ENCODE measurements at regions of chr3 and their contacts with region 1.

Region 1: DNA sequence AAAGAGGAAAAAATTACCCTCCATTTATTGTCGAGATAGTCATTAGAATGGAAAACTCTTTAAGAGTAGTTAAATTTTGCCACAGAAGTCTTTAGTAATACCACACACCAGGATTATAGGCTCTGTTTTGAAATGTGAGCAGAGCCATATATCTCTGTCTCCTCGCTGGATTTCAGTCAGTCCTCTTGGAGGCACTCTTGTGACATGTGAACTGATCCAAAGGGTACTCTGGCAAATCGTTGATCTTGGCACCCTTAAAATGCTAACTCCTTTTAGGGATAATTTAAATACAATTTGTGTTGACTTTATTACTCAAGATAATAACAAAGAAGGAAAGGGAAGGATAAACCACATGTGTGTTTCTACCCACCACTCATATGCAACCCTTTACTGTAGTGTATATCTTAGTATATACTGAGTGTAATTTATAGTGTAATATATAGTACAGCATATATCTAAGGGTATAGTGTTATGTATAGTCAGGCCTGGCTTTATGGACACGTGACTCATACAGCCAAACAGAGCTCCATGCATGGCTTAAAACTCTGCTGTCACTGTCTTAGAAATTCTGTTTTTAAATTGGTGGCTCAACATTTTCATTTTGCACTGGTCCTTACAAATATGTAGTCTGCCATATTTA is 12.3 kb upstream of the KPNA4 start:
- DNase-seq: peak; percentile 85
- ATAC-seq: peak; percentile 98
- H3K4me3 ChIP-seq: no peak overlapping the region
- H3K27ac ChIP-seq: no peak overlapping the region
- H3K4me1 ChIP-seq: peaks cover 11% of the 10 kb centered on the region
- H3K27me3 ChIP-seq: no peaks in the 10 kb centered on the region
- CTCF ChIP-seq: peak; percentile 90

Region 2: GRCh38 chr3:160598865-160599264 is 21.2 kb after region 1 on chr3:
- CTCF ChIA-PET with region 1: interaction called, 16 read pairs
- POLR2A ChIA-PET with region 1: no interaction called
- intact Hi-C with region 1: no loop called
- DNase-seq: no peak
- ATAC-seq: no peak
- H3K4me3 ChIP-seq: no peak overlapping the region
- H3K27ac ChIP-seq: no peak overlapping the region
- H3K4me1 ChIP-seq: peaks cover 6% of the 10 kb centered on the region
- H3K27me3 ChIP-seq: no peaks in the 10 kb centered on the region
- CTCF ChIP-seq: no peak

Region 3: DNA sequence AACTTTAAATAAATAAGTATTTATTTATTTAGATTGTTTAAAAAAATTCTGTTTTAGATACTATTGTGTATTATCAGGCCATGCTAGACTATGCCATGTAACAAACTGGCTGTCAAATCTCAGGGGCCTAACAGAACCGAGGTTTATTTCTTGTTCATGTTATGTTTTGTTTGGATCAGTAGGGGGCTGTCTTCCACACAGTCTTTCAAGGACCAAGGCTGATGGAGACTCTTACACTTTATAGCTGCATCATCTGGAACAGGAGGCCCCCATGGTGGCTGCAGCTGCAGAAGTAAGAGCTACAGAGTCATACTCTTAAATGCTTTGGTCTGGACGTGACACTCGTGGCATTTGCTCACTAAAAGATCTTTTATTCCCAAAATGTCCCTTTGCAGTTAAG is 66.3 kb after region 1 on chr3:
- CTCF ChIA-PET with region 1: interaction called, 3 read pairs
- POLR2A ChIA-PET with region 1: no interaction called
- intact Hi-C with region 1: loop called (anchors 5 kb)
- DNase-seq: peak; percentile 53
- ATAC-seq: peak; percentile 53; the same call in 1 of the 2 replicates
- H3K4me3 ChIP-seq: no peak overlapping the region
- H3K27ac ChIP-seq: no peak overlapping the region
- H3K4me1 ChIP-seq: peaks cover 19% of the 10 kb centered on the region
- H3K27me3 ChIP-seq: no peaks in the 10 kb centered on the region
- CTCF ChIP-seq: peak; percentile 60; the same call in 1 of the 2 replicates

Region 4: GRCh38 chr3:160686955-160687535 is 109.4 kb after region 1 on chr3:
- CTCF ChIA-PET with region 1: no interaction called
- POLR2A ChIA-PET with region 1: no interaction called
- intact Hi-C with region 1: loop called (anchors 2 kb)
- DNase-seq: peak; percentile 59
- ATAC-seq: 0 out of 2 replicates have a peak, but pooled peaks have one; percentile 33
- H3K4me3 ChIP-seq: no peak overlapping the region
- H3K27ac ChIP-seq: no peak overlapping the region
- H3K4me1 ChIP-seq: no peaks in the 10 kb centered on the region
- H3K27me3 ChIP-seq: no peaks in the 10 kb centered on the region
- CTCF ChIP-seq: peak; percentile 82

Region 5: GRCh38 chr3:160754855-160755747 is 177.4 kb after region 1 on chr3:
- CTCF ChIA-PET with region 1: no interaction called
- POLR2A ChIA-PET with region 1: no interaction called
- intact Hi-C with region 1: loop called (anchors 2 kb)
- DNase-seq: peak; percentile 96
- ATAC-seq: peak; percentile 89
- H3K4me3 ChIP-seq: peak overlapping the region; percentile 88
- H3K27ac ChIP-seq: peak overlapping the region; percentile 50
- H3K4me1 ChIP-seq: peaks cover 5% of the 10 kb centered on the region; the same call in 1 of the 2 replicates
- H3K27me3 ChIP-seq: no peaks in the 10 kb centered on the region
- CTCF ChIP-seq: no peak